WTC11 (cell line): ENCODE measurements at regions of chr9 and their contacts with region 1.

Region 1: GRCh38 chr9:131334629-131335367 is 45.3 kb downstream of the PLPP7 start:
- DNase-seq: peak; percentile 16
- ATAC-seq: peak; percentile 10; the same call in 1 of the 2 replicates
- H3K4me3 Mint-ChIP-seq: no peak overlapping the region
- H3K27ac Mint-ChIP-seq: no peak overlapping the region
- H3K4me1 Mint-ChIP-seq: peaks cover 23% of the 10 kb centered on the region
- H3K27me3 Mint-ChIP-seq: no peaks in the 10 kb centered on the region
- CTCF ChIP-seq: no peak

Region 2: GRCh38 chr9:131056781-131057506 is 277.9 kb before region 1 on chr9:
- CTCF ChIA-PET with region 1: interaction called, 11 read pairs
- POLR2A ChIA-PET with region 1: no interaction called
- DNase-seq: no peak
- ATAC-seq: no peak
- H3K4me3 Mint-ChIP-seq: no peak overlapping the region
- H3K27ac Mint-ChIP-seq: no peak overlapping the region
- H3K4me1 Mint-ChIP-seq: no peaks in the 10 kb centered on the region
- H3K27me3 Mint-ChIP-seq: no peaks in the 10 kb centered on the region
- CTCF ChIP-seq: no peak

Region 3: DNA sequence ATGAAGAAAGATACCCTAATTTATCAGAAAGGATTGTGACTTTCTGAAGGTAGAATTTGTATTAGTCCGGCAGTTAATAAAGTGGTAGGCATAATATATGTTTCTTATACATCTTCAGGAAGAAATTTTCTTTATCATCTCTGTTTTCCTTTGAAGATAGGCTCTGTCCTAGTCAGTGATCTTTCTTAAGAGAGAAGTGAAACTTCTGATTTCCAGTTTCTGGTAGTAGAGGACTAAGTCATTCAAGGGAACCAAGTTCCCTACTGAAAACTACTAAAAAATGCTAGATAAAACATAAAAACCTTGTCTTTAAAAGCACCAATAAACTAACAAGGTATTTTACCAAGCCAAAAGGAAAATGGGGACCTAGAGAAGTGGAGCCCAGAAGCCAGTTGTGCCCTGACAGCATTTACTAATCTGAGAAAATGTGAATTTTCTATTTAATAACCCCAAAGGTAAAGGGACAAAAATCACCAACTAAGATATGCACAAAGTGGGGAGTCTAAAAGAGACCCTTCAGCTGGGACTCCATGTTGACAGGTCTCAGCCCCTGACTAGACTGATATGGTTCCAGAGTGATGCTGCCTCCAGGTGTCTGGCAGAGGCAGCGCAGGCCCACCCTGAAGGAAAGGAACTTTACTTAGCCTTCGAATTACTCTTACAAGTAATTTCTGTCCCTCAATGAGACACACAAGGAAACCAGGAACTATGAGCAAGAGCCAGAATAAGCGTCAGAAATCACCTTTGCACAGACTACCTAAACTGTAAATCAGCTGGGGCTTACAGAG is 131.2 kb before region 1 on chr9:
- CTCF ChIA-PET with region 1: interaction called, 10 read pairs
- POLR2A ChIA-PET with region 1: no interaction called
- DNase-seq: peak; percentile 39
- ATAC-seq: peak; percentile 96
- H3K4me3 Mint-ChIP-seq: peak overlapping the region; percentile 35
- H3K27ac Mint-ChIP-seq: peak overlapping the region; percentile 86
- H3K4me1 Mint-ChIP-seq: peaks cover 19% of the 10 kb centered on the region
- H3K27me3 Mint-ChIP-seq: no peaks in the 10 kb centered on the region
- CTCF ChIP-seq: 0 out of 2 replicates have a peak, but pooled peaks have one; percentile 15

Region 4: GRCh38 chr9:131237931-131238401 is 96.8 kb before region 1 on chr9:
- CTCF ChIA-PET with region 1: interaction called, 20 read pairs
- POLR2A ChIA-PET with region 1: no interaction called
- DNase-seq: peak; percentile 58
- ATAC-seq: peak; percentile 77
- H3K4me3 Mint-ChIP-seq: no peak overlapping the region
- H3K27ac Mint-ChIP-seq: peak overlapping the region; percentile 95
- H3K4me1 Mint-ChIP-seq: peaks cover 21% of the 10 kb centered on the region
- H3K27me3 Mint-ChIP-seq: no peaks in the 10 kb centered on the region
- CTCF ChIP-seq: no peak

Region 5: DNA sequence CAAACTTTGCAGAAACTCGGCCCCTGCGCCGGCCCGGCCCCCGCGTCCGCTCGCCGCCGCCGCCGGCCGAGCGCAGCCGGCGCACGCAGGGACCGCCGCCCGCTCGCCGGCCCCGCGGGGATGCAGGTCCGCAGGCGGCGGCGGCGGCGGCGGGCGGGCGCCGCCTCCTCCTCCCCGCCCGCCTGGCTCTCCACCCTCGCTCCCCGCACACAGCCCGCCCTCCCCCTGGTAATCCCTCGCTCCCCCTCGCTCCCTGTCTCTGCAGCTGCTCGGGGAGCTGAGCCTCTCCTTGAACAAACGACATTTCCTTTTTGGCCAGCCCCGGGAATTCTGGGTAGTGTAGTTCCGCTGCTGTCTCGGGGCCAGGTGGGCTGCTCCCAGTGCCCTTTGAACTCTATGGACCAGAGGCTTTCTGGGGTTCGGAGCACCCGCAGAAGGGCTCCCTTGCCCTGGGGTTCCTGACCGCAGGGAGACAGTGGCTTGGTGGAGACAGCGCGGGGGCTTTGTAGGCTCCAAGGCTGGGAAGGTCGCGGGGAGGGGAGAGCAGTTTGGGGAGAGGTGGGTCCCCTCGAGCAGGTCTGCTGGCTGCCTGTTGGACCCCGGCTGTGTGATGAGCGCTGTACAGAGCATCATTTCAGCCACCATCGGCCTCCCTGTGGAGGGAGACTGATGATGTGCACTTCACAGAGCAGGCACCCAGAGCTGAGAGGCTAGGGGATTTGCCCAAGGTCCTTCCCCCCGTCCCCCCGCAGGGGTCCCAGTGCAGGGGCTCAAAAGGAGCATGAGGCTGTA is 56.7 kb before region 1 on chr9:
- CTCF ChIA-PET with region 1: interaction called, 57 read pairs
- POLR2A ChIA-PET with region 1: no interaction called
- DNase-seq: peak; percentile 86
- ATAC-seq: peak; percentile 77
- H3K4me3 Mint-ChIP-seq: peak overlapping the region; percentile 71
- H3K27ac Mint-ChIP-seq: no peak overlapping the region
- H3K4me1 Mint-ChIP-seq: peaks cover 27% of the 10 kb centered on the region
- H3K27me3 Mint-ChIP-seq: peaks cover 31% of the 10 kb centered on the region
- CTCF ChIP-seq: no peak

Region 6: GRCh38 chr9:131304687-131305394 is 30.0 kb before region 1 on chr9:
- CTCF ChIA-PET with region 1: interaction called, 49 read pairs
- POLR2A ChIA-PET with region 1: no interaction called
- DNase-seq: no peak
- ATAC-seq: no peak
- H3K4me3 Mint-ChIP-seq: no peak overlapping the region
- H3K27ac Mint-ChIP-seq: peak overlapping the region; percentile 76
- H3K4me1 Mint-ChIP-seq: 0 out of 2 replicates have a peak, but pooled peaks cover 3% of the 10 kb centered on the region
- H3K27me3 Mint-ChIP-seq: no peaks in the 10 kb centered on the region
- CTCF ChIP-seq: no peak

Region 7: DNA sequence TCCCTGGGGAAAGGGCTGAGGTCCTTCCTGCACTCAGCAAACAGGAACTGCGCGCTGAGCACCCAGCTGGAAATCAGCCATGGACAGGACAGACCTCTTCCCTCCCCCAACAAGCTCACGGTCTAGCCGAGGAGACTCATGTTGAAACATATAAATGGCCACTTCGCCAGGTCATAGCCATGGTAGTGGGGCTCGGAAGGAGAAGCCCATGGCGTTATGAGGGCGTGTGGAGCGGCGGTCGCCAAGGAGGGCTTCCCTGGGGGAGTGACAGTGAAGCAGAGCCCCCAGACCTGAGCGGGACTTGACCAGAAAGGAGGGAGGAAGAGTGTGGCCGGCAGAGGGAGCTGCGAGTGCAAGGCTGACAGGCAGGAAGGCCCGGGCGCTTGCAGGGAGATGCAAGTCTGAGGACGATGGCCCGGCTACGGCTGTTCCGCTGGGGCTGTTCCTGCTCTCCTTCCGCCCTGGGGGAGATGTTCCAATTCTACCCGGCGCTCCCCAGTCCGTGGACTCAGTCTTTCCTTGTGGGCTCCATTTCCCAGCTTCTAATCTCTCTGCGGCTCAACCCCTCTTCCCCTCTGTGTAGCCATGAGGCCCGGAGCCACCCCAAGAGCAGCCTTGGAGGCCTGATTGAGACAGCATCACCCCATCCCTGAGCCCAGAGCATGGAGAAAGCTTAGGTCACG is 15.2 kb after region 1 on chr9:
- CTCF ChIA-PET with region 1: interaction called, 70 read pairs
- POLR2A ChIA-PET with region 1: interaction called, 4 read pairs
- DNase-seq: peak; percentile 96
- ATAC-seq: peak; percentile 93
- H3K4me3 Mint-ChIP-seq: peak overlapping the region; percentile 62
- H3K27ac Mint-ChIP-seq: peak overlapping the region; percentile 75; the same call in 1 of the 2 replicates
- H3K4me1 Mint-ChIP-seq: peaks cover 7% of the 10 kb centered on the region
- H3K27me3 Mint-ChIP-seq: peaks cover 4% of the 10 kb centered on the region
- CTCF ChIP-seq: peak; percentile 68